GM13976 (cell line): ENCODE measurements at regions of chr1 and their contacts with region 1.

Region 1: DNA sequence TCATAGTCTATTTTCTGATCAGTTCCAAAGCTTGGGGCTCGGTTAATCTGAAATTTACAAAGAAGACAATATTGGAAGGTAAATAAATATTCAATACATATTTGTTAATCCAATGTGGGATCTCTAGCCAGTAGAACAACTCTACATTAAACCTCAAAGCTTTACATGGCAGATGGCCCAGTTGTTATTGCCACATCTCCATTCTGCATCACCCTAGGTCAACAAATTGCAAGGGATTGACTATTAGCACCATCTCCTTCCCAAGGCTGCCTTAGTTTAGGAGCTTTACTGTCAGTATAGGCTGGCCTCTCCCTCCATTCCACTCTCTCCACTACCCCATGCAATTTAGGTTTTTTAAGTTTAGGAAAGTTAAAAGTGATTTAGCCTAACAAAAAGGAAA is 69.7 kb downstream of the TTLL7 start:
- DNase-seq: no peak
- CTCF ChIP-seq: no peak

Region 2: DNA sequence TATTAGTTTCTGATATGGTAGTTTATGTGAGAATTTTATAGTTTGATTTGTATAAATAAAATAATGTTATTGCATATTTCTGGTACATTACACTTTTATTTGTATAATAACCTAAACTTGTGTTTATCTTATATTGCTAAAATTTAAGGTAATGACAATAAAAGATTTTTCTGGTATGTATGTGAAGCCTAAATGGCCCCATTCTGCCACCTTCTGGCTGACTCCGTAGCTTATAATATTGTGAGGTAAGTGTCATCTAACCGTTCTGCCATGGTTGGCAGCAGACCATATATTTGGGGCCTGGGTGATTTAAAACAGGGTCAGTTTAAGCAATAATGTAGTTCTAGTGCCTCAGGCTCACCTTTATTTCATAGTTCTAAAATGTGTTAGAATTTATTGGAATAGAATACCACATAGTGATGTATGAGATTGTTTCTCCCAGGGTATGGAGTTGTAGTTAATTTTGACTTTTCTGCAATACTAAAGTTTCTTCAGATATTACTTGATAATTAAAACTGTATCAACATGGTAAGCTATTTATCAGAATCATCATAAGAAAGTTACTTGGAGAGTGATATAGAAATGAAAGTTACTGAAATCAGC is 193.7 kb after region 1 on chr1:
- in situ Hi-C with region 1: loop called (anchors 10 kb)
- DNase-seq: no peak
- CTCF ChIP-seq: peak; percentile 49